ENCODE measurements at regions of chr7 and their contacts with region 1.

Region 1: DNA sequence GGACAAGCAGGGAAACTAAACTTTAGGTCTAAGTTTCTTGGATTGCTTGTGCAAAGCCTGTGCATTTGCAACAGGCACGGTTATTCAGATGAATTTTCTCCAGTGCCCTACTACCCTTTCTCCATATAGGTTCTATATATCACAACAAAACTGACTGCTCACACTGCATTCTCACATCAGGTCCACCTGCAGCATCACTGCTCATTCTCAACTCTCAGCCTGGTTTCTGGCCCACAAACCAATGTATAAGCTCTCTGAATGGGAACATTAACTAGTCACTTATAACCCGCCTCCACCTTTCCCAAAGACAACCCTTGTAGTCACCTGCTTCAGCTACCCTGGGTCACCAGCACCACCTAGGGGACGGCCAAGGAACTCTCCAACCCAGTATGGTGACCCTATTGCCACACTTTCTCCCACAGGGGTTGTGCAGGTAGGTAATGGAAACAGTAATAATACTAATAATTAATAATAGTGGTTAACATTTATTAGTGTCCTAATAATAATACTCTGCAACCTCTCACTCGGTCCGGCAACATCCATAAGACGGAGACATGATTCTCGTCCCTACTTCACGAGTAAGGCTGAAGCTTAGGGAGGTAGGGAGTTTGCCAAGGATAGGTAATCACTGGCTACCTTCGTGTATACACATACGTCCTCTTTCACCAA is 97.3 kb downstream of the CLEC2L start:
- H3K4me3 ChIP-seq: no peak overlapping the region
- H3K27ac ChIP-seq: no peak overlapping the region
- H3K4me1 ChIP-seq: no peaks in the 10 kb centered on the region
- CTCF ChIP-seq: peak; percentile 71

Region 2: DNA sequence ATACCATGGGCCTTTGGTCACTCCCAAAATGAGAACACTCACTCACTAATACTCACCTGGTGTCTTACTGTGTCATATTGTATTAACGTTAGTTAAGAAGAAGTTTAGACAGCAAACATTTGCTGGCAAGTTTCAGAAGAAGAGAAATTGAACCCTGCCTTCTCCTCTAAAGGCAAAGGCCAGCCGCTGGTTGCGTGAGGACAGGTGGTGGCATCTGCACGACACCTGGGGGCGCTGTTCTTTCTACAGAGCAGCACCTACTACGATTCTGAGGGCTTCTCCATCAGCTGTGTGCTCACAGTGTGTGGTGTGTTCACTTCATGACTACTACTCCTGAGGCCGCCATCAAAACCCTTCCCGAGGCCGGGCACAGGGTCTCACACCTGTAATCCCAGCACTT is 115.2 kb before region 1 on chr7:
- CTCF ChIA-PET with region 1: interaction called, 22 read pairs
- POLR2A ChIA-PET with region 1: no interaction called
- H3K4me3 ChIP-seq: no peak overlapping the region
- H3K27ac ChIP-seq: no peak overlapping the region
- H3K4me1 ChIP-seq: no peaks in the 10 kb centered on the region
- CTCF ChIP-seq: no peak

Region 3: GRCh38 chr7:140003913-140004382 is 383.1 kb after region 1 on chr7:
- CTCF ChIA-PET with region 1: interaction called, 38 read pairs
- POLR2A ChIA-PET with region 1: no interaction called
- H3K4me3 ChIP-seq: no peak overlapping the region
- H3K27ac ChIP-seq: no peak overlapping the region
- H3K4me1 ChIP-seq: no peaks in the 10 kb centered on the region
- CTCF ChIP-seq: 0 out of 2 replicates have a peak, but pooled peaks have one; percentile 17

Measured in HEK293 (cell line).